B cell (primary cell): ENCODE measurements at regions of chr6 and their contacts with region 1.

Region 1: GRCh38 chr6:127539272-127539671 is 20.1 kb upstream of the MTCL3 start:
- DNase-seq: peak; percentile 13
- ATAC-seq: peak; percentile 31
- H3K4me3 ChIP-seq: no peak overlapping the region
- H3K4me3 Mint-ChIP-seq: no peak overlapping the region
- H3K27ac ChIP-seq: no peak overlapping the region
- H3K27ac Mint-ChIP-seq: no peak overlapping the region
- H3K4me1 ChIP-seq: no peaks in the 10 kb centered on the region
- H3K4me1 Mint-ChIP-seq: no peaks in the 10 kb centered on the region
- H3K27me3 ChIP-seq: peaks cover 0 to 5% (median 0%) of the 10 kb centered on the region in 4 experiments
- H3K27me3 Mint-ChIP-seq: no peaks in the 10 kb centered on the region
- CTCF ChIP-seq: peak; percentile 68

Region 2: GRCh38 chr6:125995972-125996580 is 1543.2 kb before region 1 on chr6:
- CTCF ChIA-PET with region 1: interaction called, 13 read pairs
- POLR2A ChIA-PET with region 1: no interaction called
- intact Hi-C with region 1: loop called (anchors 2 kb)
- DNase-seq: peak; percentile 81
- ATAC-seq: peak; percentile 99
- H3K4me3 ChIP-seq: peak overlapping the region in 2 of 5 experiments; percentile 31 to 56
- H3K4me3 Mint-ChIP-seq: peak overlapping the region; percentile 78
- H3K27ac ChIP-seq: no peak overlapping the region
- H3K27ac Mint-ChIP-seq: no peak overlapping the region
- H3K4me1 ChIP-seq: peaks cover 0 to 4% of the 10 kb centered on the region in 2 donors
- H3K4me1 Mint-ChIP-seq: peaks cover 8% of the 10 kb centered on the region
- H3K27me3 ChIP-seq: no peaks in the 10 kb centered on the region
- H3K27me3 Mint-ChIP-seq: no peaks in the 10 kb centered on the region
- CTCF ChIP-seq: peak; percentile 100

Region 3: GRCh38 chr6:126804332-126805064 is 734.8 kb before region 1 on chr6:
- CTCF ChIA-PET with region 1: interaction called, 3 read pairs
- POLR2A ChIA-PET with region 1: no interaction called
- intact Hi-C with region 1: loop called (anchors 10 kb)
- DNase-seq: peak; percentile 11
- ATAC-seq: no peak
- H3K4me3 ChIP-seq: no peak overlapping the region
- H3K4me3 Mint-ChIP-seq: no peak overlapping the region
- H3K27ac ChIP-seq: no peak overlapping the region
- H3K27ac Mint-ChIP-seq: no peak overlapping the region
- H3K4me1 ChIP-seq: no peaks in the 10 kb centered on the region
- H3K4me1 Mint-ChIP-seq: no peaks in the 10 kb centered on the region
- H3K27me3 ChIP-seq: no peaks in the 10 kb centered on the region
- H3K27me3 Mint-ChIP-seq: peaks cover 3% of the 10 kb centered on the region
- CTCF ChIP-seq: peak; percentile 61

Region 4: GRCh38 chr6:127186889-127187288 is 352.4 kb before region 1 on chr6:
- CTCF ChIA-PET with region 1: interaction called, 6 read pairs
- POLR2A ChIA-PET with region 1: no interaction called
- intact Hi-C with region 1: loop called (anchors 2 kb)
- DNase-seq: peak; percentile 20
- ATAC-seq: no peak
- H3K4me3 ChIP-seq: no peak overlapping the region
- H3K4me3 Mint-ChIP-seq: no peak overlapping the region
- H3K27ac ChIP-seq: no peak overlapping the region
- H3K27ac Mint-ChIP-seq: no peak overlapping the region
- H3K4me1 ChIP-seq: no peaks in the 10 kb centered on the region
- H3K4me1 Mint-ChIP-seq: no peaks in the 10 kb centered on the region
- H3K27me3 ChIP-seq: no peaks in the 10 kb centered on the region
- H3K27me3 Mint-ChIP-seq: peaks cover 3% of the 10 kb centered on the region
- CTCF ChIP-seq: peak; percentile 49

Region 5: DNA sequence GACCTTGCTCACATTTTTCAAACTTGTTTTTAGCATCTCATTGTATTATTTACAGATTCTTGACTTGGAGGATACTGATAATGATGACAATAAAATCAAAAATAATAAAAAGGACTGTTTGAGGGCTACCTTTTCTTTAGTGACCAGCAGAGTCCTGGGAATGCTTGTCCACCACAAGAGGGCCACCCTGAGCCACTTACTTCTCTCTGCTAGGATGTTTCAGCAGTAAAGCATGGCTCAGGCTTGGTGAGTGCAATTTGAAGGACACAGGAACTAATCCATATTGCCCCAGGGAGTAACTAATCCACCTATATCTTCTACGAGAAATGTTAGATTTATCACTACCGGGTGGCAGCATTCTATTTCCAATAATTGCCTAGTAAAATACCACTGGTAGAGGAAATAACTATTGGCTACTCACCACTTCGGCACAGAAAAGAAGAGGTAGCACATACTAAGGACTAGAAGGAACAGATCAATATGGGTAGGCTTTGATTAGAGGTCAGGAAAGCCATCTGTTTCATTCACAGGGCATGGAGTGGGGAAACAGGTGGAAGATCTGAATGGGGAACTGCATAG is 74.3 kb before region 1 on chr6:
- CTCF ChIA-PET with region 1: interaction called, 43 read pairs
- POLR2A ChIA-PET with region 1: no interaction called
- intact Hi-C with region 1: loop called (anchors 1 kb)
- DNase-seq: peak; percentile 45
- ATAC-seq: peak; percentile 45
- H3K4me3 ChIP-seq: no peak overlapping the region
- H3K4me3 Mint-ChIP-seq: no peak overlapping the region
- H3K27ac ChIP-seq: no peak overlapping the region
- H3K27ac Mint-ChIP-seq: no peak overlapping the region
- H3K4me1 ChIP-seq: no peaks in the 10 kb centered on the region
- H3K4me1 Mint-ChIP-seq: no peaks in the 10 kb centered on the region
- H3K27me3 ChIP-seq: no peaks in the 10 kb centered on the region
- H3K27me3 Mint-ChIP-seq: no peaks in the 10 kb centered on the region
- CTCF ChIP-seq: peak; percentile 76

Region 6: GRCh38 chr6:127494240-127494767 is 45.0 kb before region 1 on chr6:
- CTCF ChIA-PET with region 1: no interaction called
- POLR2A ChIA-PET with region 1: no interaction called
- intact Hi-C with region 1: no loop called
- DNase-seq: no peak
- ATAC-seq: no peak
- H3K4me3 ChIP-seq: no peak overlapping the region
- H3K4me3 Mint-ChIP-seq: no peak overlapping the region
- H3K27ac ChIP-seq: no peak overlapping the region
- H3K27ac Mint-ChIP-seq: no peak overlapping the region
- H3K4me1 ChIP-seq: no peaks in the 10 kb centered on the region
- H3K4me1 Mint-ChIP-seq: no peaks in the 10 kb centered on the region
- H3K27me3 ChIP-seq: no peaks in the 10 kb centered on the region
- H3K27me3 Mint-ChIP-seq: peaks cover 10% of the 10 kb centered on the region
- CTCF ChIP-seq: no peak

Region 7: GRCh38 chr6:127516666-127517273 is 22.5 kb before region 1 on chr6:
- CTCF ChIA-PET with region 1: interaction called, 17 read pairs
- POLR2A ChIA-PET with region 1: no interaction called
- intact Hi-C with region 1: no loop called
- DNase-seq: peak; percentile 57
- ATAC-seq: peak; percentile 28
- H3K4me3 ChIP-seq: peak overlapping the region; percentile 30 to 72 (median 58)
- H3K4me3 Mint-ChIP-seq: peak overlapping the region; percentile 90
- H3K27ac ChIP-seq: no peak overlapping the region
- H3K27ac Mint-ChIP-seq: peak overlapping the region; percentile 4
- H3K4me1 ChIP-seq: peaks cover 24 to 36% of the 10 kb centered on the region in 2 donors
- H3K4me1 Mint-ChIP-seq: peaks cover 23% of the 10 kb centered on the region
- H3K27me3 ChIP-seq: peaks cover 2 to 57% (median 45%) of the 10 kb centered on the region in 4 experiments
- H3K27me3 Mint-ChIP-seq: peaks cover 53% of the 10 kb centered on the region
- CTCF ChIP-seq: peak; percentile 78

Region 8: GRCh38 chr6:127841811-127842210 is 302.5 kb after region 1 on chr6:
- CTCF ChIA-PET with region 1: no interaction called
- POLR2A ChIA-PET with region 1: no interaction called
- intact Hi-C with region 1: no loop called
- DNase-seq: no peak
- ATAC-seq: no peak
- H3K4me3 ChIP-seq: no peak overlapping the region
- H3K4me3 Mint-ChIP-seq: no peak overlapping the region
- H3K27ac ChIP-seq: no peak overlapping the region
- H3K27ac Mint-ChIP-seq: no peak overlapping the region
- H3K4me1 ChIP-seq: no peaks in the 10 kb centered on the region
- H3K4me1 Mint-ChIP-seq: no peaks in the 10 kb centered on the region
- H3K27me3 ChIP-seq: no peaks in the 10 kb centered on the region
- H3K27me3 Mint-ChIP-seq: no peaks in the 10 kb centered on the region
- CTCF ChIP-seq: no peak